B cell (primary cell): ENCODE measurements at regions of chr3 and their contacts with region 1.

Region 1: DNA sequence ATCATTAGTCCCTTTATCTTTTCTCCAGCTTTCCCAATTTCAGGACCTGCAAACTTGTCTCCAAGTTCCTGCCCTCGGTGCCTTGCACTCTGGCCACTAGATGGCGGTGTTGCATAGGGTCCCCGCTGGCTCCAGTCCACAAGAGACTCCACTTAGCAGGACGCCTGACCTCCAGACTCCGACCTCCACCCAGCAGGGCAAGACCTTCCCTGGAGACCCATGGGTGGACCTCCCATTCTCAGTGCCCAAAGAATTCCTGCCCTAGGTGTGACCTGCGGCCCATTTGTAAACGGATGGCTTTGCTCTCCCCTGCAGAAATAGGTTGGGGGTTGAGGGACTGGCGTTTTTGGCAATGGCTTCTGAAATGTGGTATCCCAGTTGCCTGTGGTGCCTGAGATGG is 82.6 kb downstream of the LSM3 start:
- DNase-seq: peak; percentile 80
- ATAC-seq: peak; percentile 53
- H3K4me3 ChIP-seq: no peak overlapping the region
- H3K4me3 Mint-ChIP-seq: no peak overlapping the region
- H3K27ac ChIP-seq: no peak overlapping the region
- H3K27ac Mint-ChIP-seq: no peak overlapping the region
- H3K4me1 ChIP-seq: no peaks in the 10 kb centered on the region
- H3K4me1 Mint-ChIP-seq: no peaks in the 10 kb centered on the region
- H3K27me3 ChIP-seq: peaks cover 0 to 7% (median under 1%) of the 10 kb centered on the region in 4 experiments
- H3K27me3 Mint-ChIP-seq: peaks cover 32% of the 10 kb centered on the region
- CTCF ChIP-seq: peak; percentile 99

Region 2: GRCh38 chr3:13895155-13896105 is 365.8 kb before region 1 on chr3:
- CTCF ChIA-PET with region 1: interaction called, 3 read pairs
- POLR2A ChIA-PET with region 1: no interaction called
- intact Hi-C with region 1: loop called (anchors 5 kb)
- DNase-seq: peak; percentile 92
- ATAC-seq: peak; percentile 98
- H3K4me3 ChIP-seq: peak overlapping the region; percentile 32 to 75 (median 64)
- H3K4me3 Mint-ChIP-seq: peak overlapping the region; percentile 89
- H3K27ac ChIP-seq: peak overlapping the region in 1 of 2 donors; percentile 58
- H3K27ac Mint-ChIP-seq: peak overlapping the region; percentile 69
- H3K4me1 ChIP-seq: peaks cover 17 to 33% of the 10 kb centered on the region in 2 donors
- H3K4me1 Mint-ChIP-seq: peaks cover 30% of the 10 kb centered on the region
- H3K27me3 ChIP-seq: peaks cover 0 to 7% (median 0%) of the 10 kb centered on the region in 4 experiments
- H3K27me3 Mint-ChIP-seq: peaks cover 20% of the 10 kb centered on the region
- CTCF ChIP-seq: no peak

Region 3: GRCh38 chr3:14278799-14279625 is 17.8 kb after region 1 on chr3:
- CTCF ChIA-PET with region 1: interaction called, 13 read pairs
- POLR2A ChIA-PET with region 1: no interaction called
- intact Hi-C with region 1: no loop called
- DNase-seq: no peak
- ATAC-seq: no peak
- H3K4me3 ChIP-seq: no peak overlapping the region
- H3K4me3 Mint-ChIP-seq: no peak overlapping the region
- H3K27ac ChIP-seq: no peak overlapping the region
- H3K27ac Mint-ChIP-seq: no peak overlapping the region
- H3K4me1 ChIP-seq: no peaks in the 10 kb centered on the region
- H3K4me1 Mint-ChIP-seq: no peaks in the 10 kb centered on the region
- H3K27me3 ChIP-seq: peaks cover 0 to 4% (median 0%) of the 10 kb centered on the region in 4 experiments
- H3K27me3 Mint-ChIP-seq: peaks cover 6% of the 10 kb centered on the region
- CTCF ChIP-seq: no peak

Region 4: GRCh38 chr3:14301558-14301957 is 40.3 kb after region 1 on chr3:
- CTCF ChIA-PET with region 1: no interaction called
- POLR2A ChIA-PET with region 1: no interaction called
- intact Hi-C with region 1: no loop called
- DNase-seq: no peak
- ATAC-seq: no peak
- H3K4me3 ChIP-seq: no peak overlapping the region
- H3K4me3 Mint-ChIP-seq: no peak overlapping the region
- H3K27ac ChIP-seq: no peak overlapping the region
- H3K27ac Mint-ChIP-seq: no peak overlapping the region
- H3K4me1 ChIP-seq: no peaks in the 10 kb centered on the region
- H3K4me1 Mint-ChIP-seq: no peaks in the 10 kb centered on the region
- H3K27me3 ChIP-seq: peaks cover 0 to 4% (median 0%) of the 10 kb centered on the region in 4 experiments
- H3K27me3 Mint-ChIP-seq: peaks cover 40% of the 10 kb centered on the region
- CTCF ChIP-seq: no peak

Region 5: GRCh38 chr3:14431892-14432834 is 170.9 kb after region 1 on chr3:
- CTCF ChIA-PET with region 1: interaction called, 5 read pairs
- POLR2A ChIA-PET with region 1: no interaction called
- intact Hi-C with region 1: loop called (anchors 1 kb)
- DNase-seq: peak; percentile 94
- ATAC-seq: peak; percentile 78
- H3K4me3 ChIP-seq: peak overlapping the region in 4 of 5 experiments; percentile 5 to 59 (median 34)
- H3K4me3 Mint-ChIP-seq: peak overlapping the region; percentile 80
- H3K27ac ChIP-seq: peak overlapping the region; percentile 93 to 98
- H3K27ac Mint-ChIP-seq: peak overlapping the region; percentile 94
- H3K4me1 ChIP-seq: peaks cover 75 to 89% of the 10 kb centered on the region in 2 donors
- H3K4me1 Mint-ChIP-seq: peaks cover 88% of the 10 kb centered on the region
- H3K27me3 ChIP-seq: no peaks in the 10 kb centered on the region
- H3K27me3 Mint-ChIP-seq: no peaks in the 10 kb centered on the region
- CTCF ChIP-seq: no peak

Region 6: GRCh38 chr3:14467814-14468620 is 206.8 kb after region 1 on chr3:
- CTCF ChIA-PET with region 1: interaction called, 124 read pairs
- POLR2A ChIA-PET with region 1: no interaction called
- intact Hi-C with region 1: loop called (anchors 1 kb)
- DNase-seq: peak; percentile 71
- ATAC-seq: peak; percentile 90
- H3K4me3 ChIP-seq: no peak overlapping the region
- H3K4me3 Mint-ChIP-seq: no peak overlapping the region
- H3K27ac ChIP-seq: no peak overlapping the region
- H3K27ac Mint-ChIP-seq: no peak overlapping the region
- H3K4me1 ChIP-seq: no peaks in the 10 kb centered on the region
- H3K4me1 Mint-ChIP-seq: peaks cover 2% of the 10 kb centered on the region
- H3K27me3 ChIP-seq: no peaks in the 10 kb centered on the region
- H3K27me3 Mint-ChIP-seq: no peaks in the 10 kb centered on the region
- CTCF ChIP-seq: peak; percentile 89